ENCODE measurements at regions of chrX and their contacts with region 1.

Region 1: DNA sequence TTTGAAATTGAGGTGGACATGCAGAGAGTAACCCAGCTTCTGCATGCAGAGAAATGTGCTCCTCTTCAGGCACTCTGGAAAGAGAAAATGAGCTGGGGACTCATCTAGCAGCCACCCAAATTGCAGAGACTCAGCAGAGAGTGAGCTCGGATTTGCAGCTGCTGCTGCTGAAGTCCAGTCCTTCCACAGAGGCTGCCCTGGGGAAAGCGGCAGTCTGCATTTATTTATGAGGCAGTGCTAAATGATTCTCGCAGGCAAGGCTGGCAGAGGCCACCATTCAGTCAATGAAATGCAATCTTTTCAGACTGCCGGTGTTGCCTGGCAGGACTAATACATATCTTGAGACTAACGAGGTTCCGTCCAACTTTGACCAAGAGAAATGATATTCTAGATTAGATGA is 404.8 kb downstream of the NLGN4X start:
- DNase-seq: no peak
- ATAC-seq: no peak
- H3K4me3 ChIP-seq: no peak overlapping the region
- H3K4me3 Mint-ChIP-seq: no peak overlapping the region
- H3K27ac ChIP-seq: no peak overlapping the region
- H3K27ac Mint-ChIP-seq: no peak overlapping the region
- H3K4me1 ChIP-seq: no peaks in the 10 kb centered on the region
- H3K4me1 Mint-ChIP-seq: peaks cover 0 to 1% (median 0%) of the 10 kb centered on the region in 7 donors
- H3K27me3 ChIP-seq: no peaks in the 10 kb centered on the region
- H3K27me3 Mint-ChIP-seq: no peaks in the 10 kb centered on the region

Region 2: DNA sequence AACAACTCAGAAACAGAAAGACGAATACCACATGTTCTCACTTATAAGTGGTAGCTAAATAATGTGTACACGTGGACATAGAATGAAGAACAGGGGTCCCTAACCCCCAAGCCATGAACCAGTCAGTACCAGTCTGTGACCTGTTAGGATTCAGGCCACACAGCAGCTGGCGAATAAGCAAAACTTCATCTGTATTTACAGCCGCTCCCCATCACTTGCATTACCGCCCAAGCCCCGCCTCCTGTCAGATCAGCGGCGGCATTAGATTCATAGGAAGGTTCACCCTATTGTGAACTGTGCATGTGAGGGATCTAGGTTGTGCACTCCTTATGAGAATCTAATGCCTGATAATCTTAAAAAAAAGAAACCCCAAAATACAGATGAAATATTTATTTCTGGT is 723.9 kb before region 1 on chrX:
- CTCF ChIA-PET with region 1: no interaction called
- POLR2A ChIA-PET with region 1: no interaction called
- intact Hi-C with region 1: loop called in 1 of 2 experiments (anchors 10 kb)
- DNase-seq: no peak
- ATAC-seq: no peak
- H3K4me3 ChIP-seq: no peak overlapping the region
- H3K4me3 Mint-ChIP-seq: no peak overlapping the region
- H3K27ac ChIP-seq: no peak overlapping the region
- H3K27ac Mint-ChIP-seq: no peak overlapping the region
- H3K4me1 ChIP-seq: no peaks in the 10 kb centered on the region
- H3K4me1 Mint-ChIP-seq: no peaks in the 10 kb centered on the region
- H3K27me3 ChIP-seq: no peaks in the 10 kb centered on the region
- H3K27me3 Mint-ChIP-seq: no peaks in the 10 kb centered on the region